ENCODE measurements at regions of chr1 and their contacts with region 1.

Region 1: GRCh38 chr1:86965012-86965826 is 50.8 kb downstream of the HS2ST1 start:
- DNase-seq: no peak
- H3K4me3 ChIP-seq: no peak overlapping the region
- H3K27me3 ChIP-seq: no peaks in the 10 kb centered on the region
- CTCF ChIP-seq: peak; percentile 80

Region 2: DNA sequence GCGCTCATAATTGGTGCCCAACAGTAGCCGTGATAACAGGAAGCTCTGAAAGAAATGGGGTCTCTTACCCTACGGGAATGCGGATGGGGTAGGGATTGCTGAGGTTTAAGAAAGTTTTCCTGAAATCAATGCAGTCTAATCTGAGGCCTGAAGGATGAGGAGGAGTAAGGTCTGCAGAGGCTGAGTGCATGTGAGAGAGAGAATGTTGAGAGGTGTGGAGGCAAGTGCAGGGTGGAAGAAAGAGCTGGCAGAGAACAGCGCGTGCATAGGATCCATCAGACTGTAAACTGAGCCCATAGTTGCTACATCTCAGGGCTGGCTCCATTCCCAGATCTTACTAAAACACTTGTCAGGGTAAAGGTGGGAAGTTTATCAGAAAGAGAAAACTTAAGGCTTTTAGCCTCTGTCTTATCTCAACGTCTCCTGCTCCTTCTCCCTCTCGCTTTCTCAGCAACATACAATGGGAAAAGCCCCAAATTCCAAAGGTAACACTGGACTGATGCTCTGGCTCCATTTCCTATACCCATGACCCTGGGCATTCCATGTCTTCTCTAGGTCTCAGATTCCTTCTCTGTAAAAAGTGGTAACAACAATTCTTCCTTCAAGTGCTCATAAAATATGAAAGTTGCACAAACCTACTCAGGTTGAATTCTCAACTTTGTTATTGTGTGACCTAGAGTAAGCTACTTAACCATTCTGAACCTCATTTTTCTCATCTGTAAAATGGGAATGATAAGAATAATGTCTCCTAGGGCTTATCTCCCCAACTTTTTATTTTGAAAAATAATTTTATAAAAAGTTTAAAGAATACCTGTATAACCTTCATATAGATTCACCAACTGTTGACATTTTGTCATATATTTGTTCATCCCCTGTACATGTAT is 185.7 kb before region 1 on chr1:
- CTCF ChIA-PET with region 1: interaction called, 12 read pairs
- POLR2A ChIA-PET with region 1: no interaction called
- DNase-seq: no peak
- H3K4me3 ChIP-seq: no peak overlapping the region
- H3K27me3 ChIP-seq: no peaks in the 10 kb centered on the region
- CTCF ChIP-seq: no peak

Region 3: DNA sequence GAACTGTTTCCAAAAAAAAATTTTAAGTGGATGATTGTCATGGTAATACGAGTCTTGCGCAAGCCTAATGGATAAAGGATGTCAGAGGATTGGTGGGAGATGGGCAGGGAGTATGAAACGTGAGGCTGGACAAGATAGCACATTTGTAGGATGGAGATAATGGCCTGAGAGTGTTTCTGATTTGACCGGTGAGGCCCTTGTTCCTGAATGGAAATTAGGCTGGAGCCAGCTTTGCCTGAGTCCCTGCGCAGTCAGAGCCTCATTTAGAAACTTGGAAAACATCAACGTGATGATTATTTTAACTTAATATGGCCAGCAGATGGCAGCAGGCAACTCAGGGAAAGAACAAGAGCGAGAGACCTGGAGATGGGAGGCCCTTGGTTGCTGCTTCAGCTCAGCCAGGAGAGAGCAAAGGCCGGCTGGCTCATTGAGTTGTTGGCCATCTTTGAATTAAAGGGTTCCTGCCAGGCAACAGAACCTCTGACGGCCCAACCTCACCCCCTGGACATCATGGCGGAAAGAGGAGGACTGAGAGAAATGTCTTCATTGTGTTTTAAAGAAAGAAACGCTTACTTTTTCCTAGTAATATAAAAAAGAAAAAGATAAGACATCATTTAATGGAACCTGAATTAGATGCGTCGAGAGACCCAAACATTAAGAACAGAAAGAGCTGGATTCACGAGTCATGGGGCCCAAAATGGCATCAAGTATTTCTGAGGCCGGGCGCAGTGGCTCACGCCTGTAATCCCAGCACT is 131.6 kb before region 1 on chr1:
- CTCF ChIA-PET with region 1: interaction called, 32 read pairs
- POLR2A ChIA-PET with region 1: no interaction called
- DNase-seq: peak; percentile 26
- H3K4me3 ChIP-seq: no peak overlapping the region
- H3K27me3 ChIP-seq: no peaks in the 10 kb centered on the region
- CTCF ChIP-seq: peak; percentile 57

Measured in BJ (cell line).